ENCODE measurements at regions of chr2 and their contacts with region 1.

Region 1: GRCh38 chr2:189698020-189698887 is 23.8 kb downstream of the ANKAR start:
- DNase-seq: no peak
- ATAC-seq: peak; percentile 64 to 67
- H3K4me3 ChIP-seq: no peak overlapping the region
- H3K27ac ChIP-seq: no peak overlapping the region
- H3K4me1 ChIP-seq: no peaks in the 10 kb centered on the region
- H3K27me3 ChIP-seq: no peaks in the 10 kb centered on the region

Region 2: GRCh38 chr2:189661148-189661956 is 36.9 kb before region 1 on chr2 and contains the start of gene ASNSD1:
- intact Hi-C with region 1: loop called in 3 of 4 experiments (anchors 5 kb)
- DNase-seq: peak; percentile 100
- ATAC-seq: peak; percentile 97
- H3K4me3 ChIP-seq: peak within 1 kb of the TSS; percentile 82
- H3K27ac ChIP-seq: peak within 1 kb of the TSS; percentile 84
- H3K4me1 ChIP-seq: peaks cover 2% of the 10 kb centered on the region
- H3K27me3 ChIP-seq: no peaks in the 10 kb centered on the region
- total RNA-seq, gene ASNSD1: 29.9 to 38.7 (median 31.7) TPM